Lower lobe of right lung (tissue), 2 donors: ENCODE measurements at regions of chr1 and their contacts with region 1.

Region 1: DNA sequence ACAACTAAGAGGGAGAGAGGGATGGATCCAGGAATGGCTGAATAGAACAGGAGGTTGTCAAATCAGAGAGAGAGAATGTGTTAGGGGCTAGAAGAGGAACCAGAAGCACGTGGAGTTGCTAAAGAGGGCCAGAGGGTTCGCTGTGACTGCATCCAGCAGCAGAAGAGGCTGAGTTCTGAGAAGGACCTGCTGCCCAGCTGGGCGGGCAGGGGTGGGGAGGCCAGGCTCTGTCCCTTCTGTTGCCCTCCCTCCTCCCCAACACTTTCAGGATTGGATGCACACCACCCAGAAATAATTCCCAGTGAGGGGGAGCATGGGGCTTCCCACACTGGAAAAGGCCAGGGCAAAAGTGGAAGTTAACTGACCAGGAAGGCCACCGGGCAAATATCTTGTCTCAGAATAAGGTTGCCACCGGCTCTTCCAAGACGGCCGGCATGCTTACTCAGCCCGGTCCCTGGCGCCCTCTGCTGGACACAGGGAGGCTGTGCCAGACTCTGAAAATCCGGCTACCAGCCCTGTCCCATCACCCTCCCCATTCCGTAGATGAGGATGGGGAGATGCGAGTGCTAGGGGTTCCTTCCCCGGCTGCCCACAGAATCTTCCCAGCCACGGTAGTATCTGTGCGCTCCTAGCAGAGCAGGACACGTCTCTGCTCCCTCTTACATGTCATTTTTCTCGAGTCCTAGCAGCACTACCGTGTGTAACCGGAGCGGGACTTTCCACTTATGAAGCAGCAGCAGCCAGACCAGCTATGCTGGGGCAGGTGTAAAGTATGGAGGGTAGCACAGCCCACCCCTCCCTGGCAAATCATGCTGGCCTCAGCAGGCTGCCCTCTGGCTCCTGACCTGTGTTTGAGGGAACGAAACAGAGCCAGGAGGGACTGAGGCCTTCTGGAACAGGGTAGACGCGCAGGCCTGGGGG is 46.8 kb upstream of the A3GALT2 start:
- DNase-seq: peak; percentile 92
- ATAC-seq: peak; percentile 86 to 88
- H3K4me3 ChIP-seq: no peak overlapping the region
- H3K27ac ChIP-seq: peak overlapping the region; percentile 18
- H3K4me1 ChIP-seq: peaks cover 39% of the 10 kb centered on the region
- H3K27me3 ChIP-seq: no peaks in the 10 kb centered on the region
- CTCF ChIP-seq: peak; percentile 98

Region 2: DNA sequence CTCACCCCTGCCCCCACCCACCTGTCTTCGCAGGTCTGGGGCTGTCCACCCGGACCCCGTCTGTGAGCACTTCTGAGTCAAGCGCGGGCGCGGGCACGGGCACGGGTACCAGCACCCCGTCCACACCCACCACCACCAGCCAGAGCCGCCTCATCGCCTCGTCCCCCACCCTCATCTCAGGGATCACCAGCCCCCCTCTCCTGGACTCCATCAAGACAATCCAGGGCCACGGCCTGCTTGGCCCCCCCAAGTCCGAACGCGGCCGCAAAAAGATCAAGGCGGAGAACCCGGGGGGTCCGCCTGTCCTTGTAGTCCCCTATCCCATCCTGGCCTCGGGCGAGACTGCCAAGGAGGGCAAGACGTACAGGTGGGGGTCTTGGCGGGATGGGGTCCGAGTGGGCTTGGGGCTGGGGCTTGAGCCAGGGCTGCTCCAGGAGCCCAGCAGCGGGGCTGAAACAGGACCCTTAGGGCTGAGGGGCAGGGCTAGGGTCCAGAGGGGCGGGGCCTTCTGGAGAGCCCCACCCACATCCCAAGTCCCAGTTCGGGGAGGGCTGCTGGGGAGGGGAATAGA is 87.6 kb before region 1 on chr1:
- intact Hi-C with region 1: no loop called
- DNase-seq: no peak
- ATAC-seq: peak in 1 of 2 donors; percentile 23
- H3K4me3 ChIP-seq: no peak overlapping the region
- H3K27ac ChIP-seq: no peak overlapping the region
- H3K4me1 ChIP-seq: no peaks in the 10 kb centered on the region
- H3K27me3 ChIP-seq: no peaks in the 10 kb centered on the region
- CTCF ChIP-seq: no peak

Region 3: DNA sequence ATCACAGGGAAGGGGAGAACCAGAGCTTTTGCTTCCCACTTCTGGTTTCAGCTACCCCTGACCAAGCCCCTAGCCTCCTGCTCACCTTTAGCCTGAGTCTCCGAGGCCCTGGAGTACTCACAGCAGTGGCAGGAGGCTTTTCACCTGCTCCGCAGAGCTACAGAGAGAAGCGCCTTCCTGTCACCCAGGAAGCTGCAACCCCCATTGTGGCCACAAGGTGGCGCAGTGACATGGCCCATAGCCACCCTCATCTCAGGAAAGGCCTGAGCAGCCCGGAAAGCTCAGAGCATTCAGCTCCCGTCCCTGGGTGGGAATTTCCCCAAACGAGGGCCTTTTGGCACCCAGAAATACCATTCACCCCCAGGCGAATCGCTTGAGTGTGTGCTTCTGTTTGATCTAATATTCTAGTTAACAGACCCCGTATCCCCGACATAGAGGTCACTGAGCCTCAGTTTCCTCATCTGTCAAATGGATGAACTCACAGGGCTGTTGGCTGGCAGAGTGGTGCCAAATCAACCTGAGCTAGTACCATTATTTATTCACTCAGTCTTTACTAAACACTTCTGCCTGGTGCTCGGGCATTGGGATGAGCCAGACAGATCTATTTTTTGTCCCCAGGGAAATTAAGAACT is 72.2 kb before region 1 on chr1:
- intact Hi-C with region 1: loop called (anchors 10 kb)
- DNase-seq: peak; percentile 89
- ATAC-seq: peak; percentile 89 to 94
- H3K4me3 ChIP-seq: no peak overlapping the region
- H3K27ac ChIP-seq: peak overlapping the region; percentile 39
- H3K4me1 ChIP-seq: peaks cover 21% of the 10 kb centered on the region
- H3K27me3 ChIP-seq: no peaks in the 10 kb centered on the region
- CTCF ChIP-seq: peak; percentile 100

Region 4: GRCh38 chr1:33560680-33561079 is 192.9 kb after region 1 on chr1:
- intact Hi-C with region 1: no loop called
- DNase-seq: no peak
- ATAC-seq: no peak
- H3K4me3 ChIP-seq: no peak overlapping the region
- H3K27ac ChIP-seq: no peak overlapping the region
- H3K4me1 ChIP-seq: no peaks in the 10 kb centered on the region
- H3K27me3 ChIP-seq: no peaks in the 10 kb centered on the region
- CTCF ChIP-seq: no peak